B cell (primary cell): ENCODE measurements at regions of chr2 and their contacts with region 1.

Region 1: DNA sequence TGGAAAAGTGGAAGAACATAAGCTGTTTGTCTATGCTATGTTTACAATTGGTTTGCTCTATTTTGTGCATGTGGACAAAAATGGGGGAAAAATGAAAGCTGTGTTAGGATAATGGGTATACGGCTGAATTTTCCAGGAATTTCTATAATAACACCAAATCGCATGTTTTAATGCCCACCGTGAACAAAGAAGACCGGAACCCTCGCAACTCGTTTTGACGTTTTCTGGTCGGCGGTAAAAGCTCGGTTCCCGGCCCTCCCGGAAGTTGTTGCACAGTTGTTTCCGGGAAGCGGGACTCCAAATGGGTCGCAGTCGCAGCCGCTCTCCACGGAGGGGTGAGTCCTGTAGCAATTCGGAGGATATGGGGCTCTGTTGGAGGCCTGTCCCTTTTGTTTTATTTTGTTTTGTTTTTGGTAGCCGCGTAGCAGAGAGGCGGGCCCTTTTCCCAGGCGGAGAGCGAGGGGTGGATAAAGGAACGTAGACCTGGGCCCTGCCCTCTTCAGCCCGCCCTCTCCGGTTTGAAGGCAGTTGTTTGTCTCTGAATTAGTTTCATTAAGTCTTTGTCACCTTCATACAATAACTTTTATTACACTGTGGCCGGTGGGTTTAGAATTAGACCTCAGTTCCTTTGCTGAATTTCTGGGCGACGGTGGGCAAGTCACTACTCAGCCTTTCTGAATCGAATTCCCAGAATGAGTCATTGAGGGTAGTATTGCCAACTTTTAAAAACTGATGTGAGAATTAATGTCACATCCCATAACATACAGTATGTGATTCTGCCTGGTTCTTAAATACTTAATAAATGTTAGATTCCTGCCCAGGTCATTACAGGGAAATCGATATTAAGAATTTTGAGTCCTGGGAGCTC is at the start of gene SNRNP27:
- DNase-seq: peak; percentile 85
- ATAC-seq: peak; percentile 88
- H3K4me3 ChIP-seq: peak within 1 kb of the TSS; percentile 67 to 96 (median 84)
- H3K4me3 Mint-ChIP-seq: peak within 1 kb of the TSS; percentile 98
- H3K27ac ChIP-seq: peak within 1 kb of the TSS; percentile 57 to 88
- H3K27ac Mint-ChIP-seq: peak within 1 kb of the TSS; percentile 95
- H3K4me1 ChIP-seq: peaks cover 9 to 16% of the 10 kb centered on the region in 2 donors
- H3K4me1 Mint-ChIP-seq: peaks cover 33% of the 10 kb centered on the region
- H3K27me3 ChIP-seq: no peaks in the 10 kb centered on the region
- H3K27me3 Mint-ChIP-seq: no peaks in the 10 kb centered on the region
- CTCF ChIP-seq: no peak
- total RNA-seq, gene SNRNP27: 52.0 and 54.8 TPM in 2 replicates

Region 2: GRCh38 chr2:69829256-69830046 is 64.5 kb before region 1 on chr2 and contains the start of gene GMCL1:
- CTCF ChIA-PET with region 1: no interaction called
- POLR2A ChIA-PET with region 1: no interaction called
- intact Hi-C with region 1: loop called (anchors 2 kb)
- DNase-seq: peak; percentile 99
- ATAC-seq: peak; percentile 96
- H3K4me3 ChIP-seq: peak within 1 kb of the TSS; percentile 46 to 97 (median 72)
- H3K4me3 Mint-ChIP-seq: peak within 1 kb of the TSS; percentile 99
- H3K27ac ChIP-seq: peak within 1 kb of the TSS; percentile 94 to 98
- H3K27ac Mint-ChIP-seq: peak within 1 kb of the TSS; percentile 99
- H3K4me1 ChIP-seq: peaks cover 24 to 26% of the 10 kb centered on the region in 2 donors
- H3K4me1 Mint-ChIP-seq: peaks cover 38% of the 10 kb centered on the region
- H3K27me3 ChIP-seq: no peaks in the 10 kb centered on the region
- H3K27me3 Mint-ChIP-seq: no peaks in the 10 kb centered on the region
- CTCF ChIP-seq: no peak
- total RNA-seq, gene GMCL1: 22.0 and 26.3 TPM in 2 replicates

Region 3: DNA sequence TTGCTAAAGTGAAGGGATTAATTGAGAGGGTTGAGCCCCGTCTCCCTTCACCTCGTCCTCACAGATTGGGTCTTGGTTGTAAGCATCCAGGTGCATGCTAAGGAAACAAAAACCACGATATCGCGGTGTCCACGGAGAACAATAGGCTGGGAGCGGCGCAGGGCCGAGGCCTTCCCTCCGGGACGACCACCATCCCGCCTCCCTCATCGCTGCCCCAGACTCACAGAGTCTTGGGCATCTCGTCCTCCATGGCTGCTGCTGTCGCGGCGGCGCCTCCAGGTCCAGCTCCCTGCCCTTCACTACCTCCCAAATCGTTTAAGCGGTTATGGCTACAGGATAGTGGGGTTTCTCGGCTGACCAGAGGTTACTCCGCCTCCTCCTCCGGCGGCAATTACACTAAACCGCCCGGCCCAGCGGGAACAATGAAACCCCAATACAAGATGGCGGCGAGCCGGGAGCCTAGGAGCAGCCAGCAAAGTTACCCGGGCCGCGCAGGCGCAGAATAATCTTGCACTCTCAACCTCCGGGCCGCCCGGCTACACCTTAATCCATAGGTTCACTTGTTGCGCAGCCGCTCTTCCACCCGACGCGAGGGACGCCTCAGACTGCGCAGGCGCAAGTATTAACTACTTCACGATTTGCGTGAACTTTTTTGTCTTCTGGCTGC is 354.4 kb after region 1 on chr2 and contains the start of gene TIA1:
- CTCF ChIA-PET with region 1: no interaction called
- POLR2A ChIA-PET with region 1: interaction called, 7 read pairs
- intact Hi-C with region 1: loop called (anchors 1 kb)
- DNase-seq: peak; percentile 99
- ATAC-seq: peak; percentile 96
- H3K4me3 ChIP-seq: peak within 1 kb of the TSS; percentile 70 to 98 (median 95)
- H3K4me3 Mint-ChIP-seq: peak within 1 kb of the TSS; percentile 98
- H3K27ac ChIP-seq: peak within 1 kb of the TSS; percentile 86 to 94
- H3K27ac Mint-ChIP-seq: peak within 1 kb of the TSS; percentile 98
- H3K4me1 ChIP-seq: peaks cover 24 to 29% of the 10 kb centered on the region in 2 donors
- H3K4me1 Mint-ChIP-seq: peaks cover 35% of the 10 kb centered on the region
- H3K27me3 ChIP-seq: no peaks in the 10 kb centered on the region
- H3K27me3 Mint-ChIP-seq: no peaks in the 10 kb centered on the region
- CTCF ChIP-seq: no peak
- total RNA-seq, gene TIA1: 214 and 243 TPM in 2 replicates

Region 4: DNA sequence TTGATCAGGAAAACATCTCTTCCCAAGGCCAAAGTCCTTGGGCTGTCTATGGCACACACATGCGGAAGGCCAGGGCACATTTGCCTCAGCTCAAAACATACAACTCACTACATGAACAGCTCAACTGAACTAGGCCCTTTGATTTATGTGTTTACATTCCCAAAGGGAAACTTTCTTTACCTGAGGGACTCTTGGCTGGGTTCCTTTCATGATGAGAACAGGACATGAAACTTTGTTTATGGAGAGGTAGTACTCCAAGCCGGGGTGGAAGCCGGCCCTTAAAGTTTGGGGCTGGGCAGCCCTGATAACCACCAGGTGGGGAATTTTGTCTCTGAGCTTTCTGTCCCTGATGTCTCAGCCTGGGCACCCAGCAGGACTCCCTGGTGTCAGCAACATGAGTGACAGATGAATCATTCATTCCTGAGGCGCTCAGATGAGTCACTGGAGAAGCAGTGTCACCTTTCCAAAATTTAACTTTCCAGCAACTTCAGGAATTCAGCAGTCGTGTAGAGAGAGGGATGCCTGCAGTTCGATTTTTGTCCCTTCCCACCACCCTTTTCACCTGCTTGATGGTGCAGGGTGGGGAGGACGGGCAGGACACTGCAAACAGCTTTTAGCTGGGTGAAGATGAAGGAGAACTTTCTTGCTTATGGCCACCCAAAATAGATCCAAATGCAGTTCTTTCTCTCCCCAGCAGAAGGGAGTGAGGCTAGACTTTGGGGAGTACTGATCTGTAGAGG is 1891.0 kb after region 1 on chr2:
- CTCF ChIA-PET with region 1: no interaction called
- POLR2A ChIA-PET with region 1: no interaction called
- intact Hi-C with region 1: no loop called
- DNase-seq: no peak
- ATAC-seq: no peak
- H3K4me3 ChIP-seq: no peak overlapping the region
- H3K4me3 Mint-ChIP-seq: no peak overlapping the region
- H3K27ac ChIP-seq: no peak overlapping the region
- H3K27ac Mint-ChIP-seq: no peak overlapping the region
- H3K4me1 ChIP-seq: no peaks in the 10 kb centered on the region
- H3K4me1 Mint-ChIP-seq: no peaks in the 10 kb centered on the region
- H3K27me3 ChIP-seq: peaks cover 0 to 2% (median 0%) of the 10 kb centered on the region in 4 experiments
- H3K27me3 Mint-ChIP-seq: peaks cover 5% of the 10 kb centered on the region
- CTCF ChIP-seq: no peak